Activated CD4-positive, alpha-beta memory T cell treated with anti-CD3 and anti-CD28 coated beads for 36 hours (primary cell): ENCODE measurements at regions of chr19 and their contacts with region 1.

Region 1: GRCh38 chr19:19192078-19192882 is at the starts of genes BORCS8 and RFXANK:
- DNase-seq: peak; percentile 100
- H3K4me3 Mint-ChIP-seq: peak within 1 kb of the TSS; percentile 96
- H3K27ac Mint-ChIP-seq: peak within 1 kb of the TSS; percentile 96
- H3K4me1 Mint-ChIP-seq: peaks cover 38% of the 10 kb centered on the region
- H3K27me3 Mint-ChIP-seq: no peaks in the 10 kb centered on the region
- total RNA-seq, gene BORCS8: 16.4 to 17.8 TPM
- total RNA-seq, gene RFXANK: 73.7 to 78.1 TPM

Region 2: GRCh38 chr19:18919086-18919899 is 273.0 kb before region 1 on chr19 and contains the starts of genes COPE and DDX49:
- CTCF ChIA-PET with region 1: no interaction called
- POLR2A ChIA-PET with region 1: interaction called, 3 read pairs
- intact Hi-C with region 1: loop called (anchors 1 kb)
- DNase-seq: peak; percentile 99
- H3K4me3 Mint-ChIP-seq: peak within 1 kb of the TSS; percentile 89
- H3K27ac Mint-ChIP-seq: peak within 1 kb of the TSS; percentile 84
- H3K4me1 Mint-ChIP-seq: peaks cover 35% of the 10 kb centered on the region
- H3K27me3 Mint-ChIP-seq: no peaks in the 10 kb centered on the region
- total RNA-seq, gene COPE: 217 to 220 TPM
- total RNA-seq, gene DDX49: 37.7 to 46.3 TPM

Region 3: GRCh38 chr19:19138169-19138981 is 53.9 kb before region 1 on chr19 and contains the start of gene TMEM161A:
- CTCF ChIA-PET with region 1: no interaction called
- POLR2A ChIA-PET with region 1: no interaction called
- intact Hi-C with region 1: loop called (anchors 1 kb)
- DNase-seq: peak; percentile 99
- H3K4me3 Mint-ChIP-seq: peak within 1 kb of the TSS; percentile 86
- H3K27ac Mint-ChIP-seq: peak within 1 kb of the TSS; percentile 78
- H3K4me1 Mint-ChIP-seq: peaks cover 29% of the 10 kb centered on the region
- H3K27me3 Mint-ChIP-seq: no peaks in the 10 kb centered on the region
- total RNA-seq, gene TMEM161A: 17.8 to 18.9 TPM

Region 4: GRCh38 chr19:19203012-19203856 is 11.0 kb after region 1 on chr19 and contains the start of gene NR2C2AP:
- CTCF ChIA-PET with region 1: interaction called, 14 read pairs
- POLR2A ChIA-PET with region 1: interaction called, 25 read pairs
- intact Hi-C with region 1: loop called (anchors 1 kb)
- DNase-seq: peak; percentile 96
- H3K4me3 Mint-ChIP-seq: peak within 1 kb of the TSS; percentile 94
- H3K27ac Mint-ChIP-seq: peak within 1 kb of the TSS; percentile 93
- H3K4me1 Mint-ChIP-seq: peaks cover 31% of the 10 kb centered on the region
- H3K27me3 Mint-ChIP-seq: no peaks in the 10 kb centered on the region
- total RNA-seq, gene NR2C2AP: 39.2 to 42.9 TPM

Region 5: DNA sequence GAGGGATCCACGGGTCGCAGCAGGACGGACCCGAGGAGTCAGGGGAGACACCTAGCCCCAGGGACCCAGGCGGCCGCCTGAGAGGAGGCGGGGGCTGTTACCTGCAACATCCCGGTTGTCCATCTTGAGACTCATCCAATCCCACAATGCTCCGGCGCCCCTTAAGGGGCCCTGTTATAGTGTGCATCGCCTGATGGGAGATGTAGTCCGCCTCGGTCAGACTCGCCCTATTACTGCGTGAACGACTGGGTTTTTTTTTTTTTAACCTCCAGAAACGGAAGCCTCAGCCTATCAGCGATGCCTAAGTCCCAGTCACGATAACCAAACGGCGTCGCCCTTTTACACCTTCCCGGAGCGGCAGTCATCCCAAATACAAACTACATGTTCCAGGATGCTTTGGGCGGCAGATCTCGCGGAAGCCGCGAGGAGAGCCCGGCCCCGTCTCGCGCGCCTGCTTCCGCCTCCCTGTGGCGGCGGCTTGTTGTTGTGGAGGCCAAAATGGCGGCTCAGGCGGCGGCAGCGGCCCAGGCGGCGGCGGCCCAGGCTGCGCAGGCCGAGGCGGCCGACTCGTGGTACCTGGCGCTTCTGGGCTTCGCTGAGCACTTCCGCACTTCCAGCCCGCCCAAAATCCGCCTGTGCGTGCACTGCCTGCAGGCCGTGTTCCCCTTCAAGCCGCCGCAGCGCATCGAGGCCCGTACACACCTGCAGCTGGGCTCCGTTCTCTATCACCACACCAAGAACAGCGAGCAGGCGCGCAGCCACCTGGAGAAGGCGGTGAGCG is 128.3 kb after region 1 on chr19 and contains the starts of genes MAU2 and SUGP1:
- CTCF ChIA-PET with region 1: no interaction called
- POLR2A ChIA-PET with region 1: interaction called, 5 read pairs
- intact Hi-C with region 1: loop called (anchors 1 kb)
- DNase-seq: peak; percentile 94
- H3K4me3 Mint-ChIP-seq: peak within 1 kb of the TSS; percentile 94
- H3K27ac Mint-ChIP-seq: peak within 1 kb of the TSS; percentile 96
- H3K4me1 Mint-ChIP-seq: peaks cover 35% of the 10 kb centered on the region
- H3K27me3 Mint-ChIP-seq: no peaks in the 10 kb centered on the region
- total RNA-seq, gene MAU2: 38.6 to 40.9 TPM
- total RNA-seq, gene SUGP1: 39.2 to 44.0 TPM